GM18951 (cell line): ENCODE measurements at regions of chrX and their contacts with region 1.

Region 1: GRCh38 chrX:119201570-119201969 is 34.5 kb upstream of the PGRMC1 start:
- POLR2A ChIP-seq: no peak

Region 2: DNA sequence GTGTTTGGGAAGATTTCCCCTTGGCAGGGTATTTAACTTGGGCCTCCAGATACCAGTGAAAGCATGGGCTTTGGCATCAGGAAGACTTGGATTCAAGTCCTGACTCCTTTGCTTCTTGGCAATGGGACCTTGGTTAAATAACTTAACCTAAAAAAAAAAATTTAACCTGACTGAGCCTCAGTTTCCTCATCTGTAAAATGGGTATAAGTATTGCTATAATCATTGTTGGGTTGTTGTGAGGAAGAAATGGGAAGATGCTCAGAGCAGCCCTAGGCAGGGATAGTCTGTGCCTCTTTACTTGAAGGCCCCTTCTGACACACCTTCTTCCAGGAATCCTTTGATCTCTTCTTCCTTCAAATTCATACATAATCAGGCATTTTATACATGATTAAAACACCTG is 307.6 kb before region 1 on chrX:
- in situ Hi-C with region 1: no loop called
- POLR2A ChIP-seq: no peak

Region 3: DNA sequence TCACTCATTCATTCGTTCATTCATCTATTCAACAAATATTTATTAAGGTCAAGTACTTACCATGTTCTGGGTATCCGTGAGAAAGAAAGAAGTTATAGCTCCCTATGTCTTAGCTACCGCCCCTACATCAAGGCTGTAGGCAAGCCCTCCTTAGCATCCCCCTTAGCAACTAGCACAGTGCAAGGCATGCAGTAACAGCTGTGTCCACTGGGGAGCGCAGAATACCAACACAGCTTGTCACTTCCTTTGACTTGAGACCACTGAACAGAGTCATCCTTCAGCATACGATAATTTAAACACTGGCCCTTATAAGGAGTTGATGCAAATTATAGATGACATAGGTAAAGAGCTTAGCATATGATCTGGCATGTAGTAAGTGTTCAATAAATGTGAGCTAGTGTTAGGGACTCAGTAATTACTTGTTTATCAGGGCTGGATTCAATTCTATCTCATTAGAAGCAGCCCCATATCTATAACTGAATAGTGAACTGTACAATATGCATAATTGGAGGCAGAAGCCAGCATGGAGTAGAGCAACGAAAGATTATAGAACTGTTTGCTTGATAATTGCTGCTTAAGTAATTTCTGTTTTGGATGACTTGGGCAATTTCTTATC is 82.7 kb before region 1 on chrX:
- in situ Hi-C with region 1: loop called (anchors 5 kb)
- POLR2A ChIP-seq: no peak